ENCODE measurements at regions of chr14 and their contacts with region 1.

Region 1: GRCh38 chr14:94439453-94440057 is 13.0 kb downstream of the SERPINA11 start:
- DNase-seq: no peak
- H3K4me3 ChIP-seq: no peak overlapping the region
- H3K27ac ChIP-seq: no peak overlapping the region
- H3K4me1 ChIP-seq: no peaks in the 10 kb centered on the region
- H3K27me3 ChIP-seq: no peaks in the 10 kb centered on the region
- CTCF ChIP-seq: no peak

Region 2: GRCh38 chr14:94345337-94346064 is 94.1 kb before region 1 on chr14:
- intact Hi-C with region 1: no loop called
- DNase-seq: no peak
- H3K4me3 ChIP-seq: no peak overlapping the region
- H3K27ac ChIP-seq: no peak overlapping the region
- H3K4me1 ChIP-seq: no peaks in the 10 kb centered on the region
- H3K27me3 ChIP-seq: no peaks in the 10 kb centered on the region
- CTCF ChIP-seq: no peak

Region 3: DNA sequence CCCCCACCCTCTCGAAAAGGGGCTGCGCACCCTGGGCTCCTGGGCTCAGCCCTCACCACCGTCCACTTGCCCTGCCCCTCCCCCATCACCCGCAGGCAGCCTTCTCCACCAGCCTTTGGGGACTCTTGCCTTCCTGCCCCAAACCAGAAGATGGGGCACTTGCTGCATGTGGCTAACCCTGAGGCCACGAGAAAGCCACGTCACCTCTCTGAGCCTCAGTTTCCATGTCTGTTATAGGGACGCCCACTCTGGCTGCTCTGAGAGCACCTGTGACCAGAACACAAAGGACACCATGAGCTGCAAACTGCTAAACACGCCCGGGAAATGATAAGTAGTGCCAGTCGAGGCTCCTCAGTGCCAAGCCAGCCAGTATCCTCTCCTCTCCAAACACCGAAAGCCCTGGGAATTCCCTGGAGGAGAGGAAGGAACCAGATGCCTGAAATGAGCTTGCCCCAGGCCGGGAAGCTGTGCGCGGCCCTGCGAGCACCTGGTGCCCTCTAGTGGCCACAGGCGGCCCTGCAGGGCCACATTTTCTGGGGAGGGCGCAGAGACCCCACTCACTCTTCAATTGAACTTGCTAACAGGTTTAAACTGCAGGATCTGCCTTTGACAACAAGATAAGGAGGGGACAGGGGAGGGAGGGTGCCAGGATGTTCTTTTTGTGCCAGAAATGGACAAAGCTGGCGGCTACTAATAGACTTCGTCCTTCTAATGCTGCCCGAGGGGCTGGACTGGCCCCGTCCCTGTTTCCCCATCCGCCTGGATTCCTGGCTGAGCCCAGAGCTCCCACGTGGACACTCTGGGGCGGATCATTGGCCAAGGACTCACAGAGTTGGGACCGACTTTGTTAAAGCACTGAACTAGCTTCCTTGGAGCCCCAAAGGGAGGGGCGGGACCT is 46.6 kb after region 1 on chr14:
- intact Hi-C with region 1: loop called (anchors 10 kb)
- DNase-seq: peak; percentile 28
- H3K4me3 ChIP-seq: no peak overlapping the region
- H3K27ac ChIP-seq: no peak overlapping the region
- H3K4me1 ChIP-seq: no peaks in the 10 kb centered on the region
- H3K27me3 ChIP-seq: no peaks in the 10 kb centered on the region
- CTCF ChIP-seq: peak; percentile 98

Region 4: GRCh38 chr14:94559638-94560290 is 120.2 kb after region 1 on chr14:
- intact Hi-C with region 1: loop called (anchors 10 kb)
- DNase-seq: no peak
- H3K4me3 ChIP-seq: no peak overlapping the region
- H3K27ac ChIP-seq: no peak overlapping the region
- H3K4me1 ChIP-seq: no peaks in the 10 kb centered on the region
- H3K27me3 ChIP-seq: no peaks in the 10 kb centered on the region
- CTCF ChIP-seq: no peak

Measured in colonic mucosa (tissue), 4 donors.